ENCODE measurements at regions of chr15 and their contacts with region 1.

Region 1: GRCh38 chr15:82262422-82263026 is at the starts of genes EFL1 and SAXO2:
- DNase-seq: peak; percentile 82 to 95 (median 90)
- H3K4me3 ChIP-seq: peak within 1 kb of the TSS; percentile 77 to 84
- H3K4me3 Mint-ChIP-seq: peak within 1 kb of the TSS; percentile 93 to 98 (median 96)
- H3K27ac ChIP-seq: peak within 1 kb of the TSS; percentile 54
- H3K27ac Mint-ChIP-seq: peak within 1 kb of the TSS; percentile 78 to 97 (median 95)
- H3K4me1 ChIP-seq: peaks cover 22% of the 10 kb centered on the region
- H3K4me1 Mint-ChIP-seq: peaks cover 20 to 40% (median 25%) of the 10 kb centered on the region in 4 donors
- H3K27me3 ChIP-seq: no peaks in the 10 kb centered on the region
- H3K27me3 Mint-ChIP-seq: no peaks in the 10 kb centered on the region
- total RNA-seq, gene EFL1: 19.9 to 23.1 TPM
- total RNA-seq, gene SAXO2: 1.7 to 2.7 TPM

Region 2: GRCh38 chr15:82046666-82047452 is 215.7 kb before region 1 on chr15:
- CTCF ChIA-PET with region 1: no interaction called
- POLR2A ChIA-PET with region 1: interaction called, 3 read pairs
- intact Hi-C with region 1: loop called (anchors 2 kb)
- DNase-seq: peak; percentile 86 to 91 (median 90)
- H3K4me3 ChIP-seq: peak overlapping the region; percentile 69 to 75
- H3K4me3 Mint-ChIP-seq: peak overlapping the region; percentile 86 to 94 (median 91)
- H3K27ac ChIP-seq: peak overlapping the region; percentile 69
- H3K27ac Mint-ChIP-seq: peak overlapping the region; percentile 17 to 98 (median 88)
- H3K4me1 ChIP-seq: peaks cover 19% of the 10 kb centered on the region
- H3K4me1 Mint-ChIP-seq: peaks cover 4 to 24% (median 14%) of the 10 kb centered on the region in 4 donors
- H3K27me3 ChIP-seq: no peaks in the 10 kb centered on the region
- H3K27me3 Mint-ChIP-seq: peaks cover 4 to 9% of the 10 kb centered on the region in 2 donors

Region 3: DNA sequence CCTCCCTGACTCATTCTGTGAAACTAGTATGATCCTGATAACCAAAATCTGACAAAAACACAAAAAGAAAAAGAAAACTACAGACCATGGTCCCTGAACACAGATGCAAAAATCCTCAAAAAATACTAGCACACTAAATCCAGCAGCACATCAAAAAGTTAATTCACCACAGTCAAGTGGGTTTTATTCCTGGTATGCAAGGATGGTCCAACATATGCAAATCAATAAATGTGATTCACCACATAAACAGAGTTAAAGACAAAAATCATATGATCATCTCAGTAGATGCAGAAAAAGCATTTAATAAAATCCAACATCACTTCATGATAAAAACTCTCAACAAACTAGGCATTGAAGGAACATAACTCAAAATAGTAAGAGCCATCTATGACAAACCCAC is 12.9 kb after region 1 on chr15:
- CTCF ChIA-PET with region 1: interaction called, 15 read pairs
- POLR2A ChIA-PET with region 1: no interaction called
- intact Hi-C with region 1: no loop called
- DNase-seq: no peak
- H3K4me3 ChIP-seq: no peak overlapping the region
- H3K4me3 Mint-ChIP-seq: no peak overlapping the region
- H3K27ac ChIP-seq: no peak overlapping the region
- H3K27ac Mint-ChIP-seq: no peak overlapping the region
- H3K4me1 ChIP-seq: no peaks in the 10 kb centered on the region
- H3K4me1 Mint-ChIP-seq: no peaks in the 10 kb centered on the region
- H3K27me3 ChIP-seq: no peaks in the 10 kb centered on the region
- H3K27me3 Mint-ChIP-seq: peaks cover 2 to 5% of the 10 kb centered on the region in 2 donors

Region 4: GRCh38 chr15:82298520-82298919 is 36.0 kb after region 1 on chr15:
- CTCF ChIA-PET with region 1: no interaction called
- POLR2A ChIA-PET with region 1: interaction called, 6 read pairs
- intact Hi-C with region 1: loop called (anchors 1 kb)
- DNase-seq: peak; percentile 61 to 74 (median 69)
- H3K4me3 ChIP-seq: no peak overlapping the region
- H3K4me3 Mint-ChIP-seq: peak overlapping the region in 4 of 8 donors; percentile 25 to 73 (median 58)
- H3K27ac ChIP-seq: no peak overlapping the region
- H3K27ac Mint-ChIP-seq: peak overlapping the region; percentile 57 to 92 (median 73)
- H3K4me1 ChIP-seq: peaks cover 15% of the 10 kb centered on the region
- H3K4me1 Mint-ChIP-seq: peaks cover 13 to 23% (median 17%) of the 10 kb centered on the region in 4 donors
- H3K27me3 ChIP-seq: no peaks in the 10 kb centered on the region
- H3K27me3 Mint-ChIP-seq: no peaks in the 10 kb centered on the region

Region 5: GRCh38 chr15:83066734-83067637 is 804.5 kb after region 1 on chr15 and contains the start of gene BTBD1:
- CTCF ChIA-PET with region 1: no interaction called
- POLR2A ChIA-PET with region 1: no interaction called
- intact Hi-C with region 1: loop called (anchors 10 kb)
- DNase-seq: peak; percentile 72 to 82 (median 78)
- H3K4me3 ChIP-seq: peak within 1 kb of the TSS; percentile 58 to 82
- H3K4me3 Mint-ChIP-seq: peak within 1 kb of the TSS; percentile 78 to 96 (median 86)
- H3K27ac ChIP-seq: peak within 1 kb of the TSS; percentile 78
- H3K27ac Mint-ChIP-seq: peak within 1 kb of the TSS; percentile 58 to 94 (median 84)
- H3K4me1 ChIP-seq: peaks cover 44% of the 10 kb centered on the region
- H3K4me1 Mint-ChIP-seq: peaks cover 6 to 16% (median 13%) of the 10 kb centered on the region in 4 donors
- H3K27me3 ChIP-seq: no peaks in the 10 kb centered on the region
- H3K27me3 Mint-ChIP-seq: no peaks in the 10 kb centered on the region
- total RNA-seq, gene BTBD1: 36.5 to 39.6 TPM